AG04450 (cell line): ENCODE measurements at regions of chr20 and their contacts with region 1.

Region 1: DNA sequence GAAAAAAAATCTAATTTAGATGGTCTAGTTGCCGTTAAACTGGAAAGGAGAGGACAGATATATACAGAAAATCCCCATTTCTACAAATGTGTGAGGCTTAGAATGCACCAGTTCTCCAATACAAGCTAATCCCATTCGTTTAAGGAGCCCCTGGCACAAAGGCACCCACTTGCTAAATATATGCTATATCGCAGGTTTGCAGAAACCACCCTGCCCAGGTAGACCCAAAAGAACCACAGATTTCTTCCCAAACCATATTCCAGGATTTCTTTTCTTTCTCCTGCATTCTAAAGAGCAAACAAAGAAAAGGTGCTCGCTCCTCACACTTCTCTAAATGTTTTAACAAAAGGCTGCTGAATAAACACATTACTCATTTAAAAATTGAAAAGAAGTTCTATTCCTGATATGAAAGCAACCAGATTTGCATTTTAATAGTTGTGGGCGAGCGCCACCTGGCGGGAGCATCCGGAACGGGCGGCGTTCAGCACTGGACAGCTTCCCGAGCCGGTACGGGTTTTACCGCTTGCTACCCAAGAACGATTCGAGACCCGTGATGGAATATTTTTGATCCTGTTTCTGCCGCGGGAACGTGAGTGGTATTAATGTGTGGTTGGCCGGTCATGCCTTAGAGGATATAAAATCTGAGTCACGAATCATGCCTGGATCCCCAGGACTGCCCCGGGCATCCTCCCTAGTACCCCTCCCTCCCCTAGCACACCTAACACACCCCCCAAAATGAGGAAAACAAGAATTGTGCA is 2.1 kb downstream of the PTPRT start:
- DNase-seq: no peak
- H3K4me3 ChIP-seq: no peak overlapping the region
- H3K27ac ChIP-seq: no peak overlapping the region
- H3K27me3 ChIP-seq: peaks cover 17% of the 10 kb centered on the region
- CTCF ChIP-seq: peak; percentile 93

Region 2: GRCh38 chr20:41738604-41739206 is 1449.0 kb before region 1 on chr20:
- CTCF ChIA-PET with region 1: interaction called, 33 read pairs
- POLR2A ChIA-PET with region 1: no interaction called
- DNase-seq: no peak
- H3K4me3 ChIP-seq: no peak overlapping the region
- H3K27ac ChIP-seq: no peak overlapping the region
- H3K27me3 ChIP-seq: no peaks in the 10 kb centered on the region
- CTCF ChIP-seq: peak; percentile 92

Region 3: DNA sequence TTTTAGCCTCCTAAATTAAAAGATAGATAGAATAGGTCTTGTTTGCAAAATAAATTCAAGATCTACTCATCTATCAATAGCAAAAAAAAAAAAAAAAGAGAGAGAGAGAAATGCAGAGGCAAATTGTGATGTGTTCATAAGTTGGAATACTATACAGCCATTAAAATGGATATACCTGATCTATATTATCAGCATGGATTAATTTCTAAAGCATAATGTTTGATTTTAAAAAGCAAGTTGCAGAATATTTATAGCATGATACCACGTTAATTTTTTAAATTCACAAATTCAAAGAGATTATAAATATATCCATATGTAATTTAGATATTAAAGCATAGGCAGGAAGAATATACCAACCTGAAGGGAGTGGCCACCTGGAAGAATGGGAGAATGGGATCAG is 116.9 kb after region 1 on chr20:
- CTCF ChIA-PET with region 1: interaction called, 10 read pairs
- POLR2A ChIA-PET with region 1: no interaction called
- DNase-seq: no peak
- H3K4me3 ChIP-seq: no peak overlapping the region
- H3K27ac ChIP-seq: no peak overlapping the region
- H3K27me3 ChIP-seq: no peaks in the 10 kb centered on the region
- CTCF ChIP-seq: no peak